ENCODE measurements at regions of chr15 and their contacts with region 1.

Region 1: GRCh38 chr15:85044251-85044853 is 62.7 kb downstream of the PDE8A start:
- DNase-seq: peak; percentile 77
- H3K4me3 ChIP-seq: no peak overlapping the region
- H3K27ac ChIP-seq: no peak overlapping the region
- H3K4me1 ChIP-seq: peaks cover 47% of the 10 kb centered on the region
- H3K27me3 ChIP-seq: no peaks in the 10 kb centered on the region
- CTCF ChIP-seq: peak; percentile 67

Region 2: GRCh38 chr15:84588053-84588874 is 456.1 kb before region 1 on chr15:
- CTCF ChIA-PET with region 1: no interaction called
- POLR2A ChIA-PET with region 1: no interaction called
- intact Hi-C with region 1: loop called (anchors 5 kb)
- DNase-seq: peak; percentile 91
- H3K4me3 ChIP-seq: peak overlapping the region; percentile 39
- H3K27ac ChIP-seq: no peak overlapping the region
- H3K4me1 ChIP-seq: peaks cover 12% of the 10 kb centered on the region
- H3K27me3 ChIP-seq: no peaks in the 10 kb centered on the region
- CTCF ChIP-seq: peak; percentile 70

Region 3: DNA sequence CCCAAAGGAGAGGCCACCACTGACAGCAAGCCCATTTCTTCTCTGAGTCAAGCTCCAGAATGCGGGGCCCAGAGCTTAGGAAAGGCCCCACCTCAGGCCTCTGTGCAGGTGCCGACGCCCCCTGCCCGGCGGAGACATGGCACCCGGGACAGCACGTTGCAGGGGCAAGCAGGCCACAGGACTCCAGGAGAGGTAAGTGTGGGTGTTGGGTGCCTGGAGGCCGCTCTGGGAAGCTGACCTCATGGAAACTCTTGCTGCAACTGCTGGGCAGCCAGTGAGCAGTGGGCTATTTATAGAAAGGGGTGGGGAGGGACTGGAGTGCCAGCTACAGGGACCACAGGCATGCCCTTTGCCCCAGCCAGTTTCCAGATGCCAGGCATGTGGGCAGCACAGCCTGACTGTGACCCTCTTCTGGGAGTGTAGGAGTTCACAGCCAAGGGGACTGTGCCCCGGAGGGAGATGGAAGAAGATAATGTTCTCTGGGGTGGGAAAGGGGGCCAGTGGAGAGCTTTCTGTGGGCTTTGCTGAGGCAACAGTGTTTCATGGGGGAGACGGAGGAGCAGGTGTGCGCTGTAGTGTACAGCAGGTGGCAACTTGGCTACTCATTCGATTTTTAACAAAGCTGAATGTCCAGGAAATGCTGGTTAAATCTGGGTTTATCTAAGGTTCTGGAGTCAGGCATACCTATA is 203.5 kb before region 1 on chr15:
- CTCF ChIA-PET with region 1: no interaction called
- POLR2A ChIA-PET with region 1: no interaction called
- intact Hi-C with region 1: loop called (anchors 10 kb)
- DNase-seq: no peak
- H3K4me3 ChIP-seq: no peak overlapping the region
- H3K27ac ChIP-seq: no peak overlapping the region
- H3K4me1 ChIP-seq: no peaks in the 10 kb centered on the region
- H3K27me3 ChIP-seq: no peaks in the 10 kb centered on the region
- CTCF ChIP-seq: no peak

Region 4: GRCh38 chr15:84987949-84988624 is 56.3 kb before region 1 on chr15:
- CTCF ChIA-PET with region 1: no interaction called
- POLR2A ChIA-PET with region 1: no interaction called
- intact Hi-C with region 1: loop called (anchors 5 kb)
- DNase-seq: no peak
- H3K4me3 ChIP-seq: no peak overlapping the region
- H3K27ac ChIP-seq: no peak overlapping the region
- H3K4me1 ChIP-seq: peaks cover 72% of the 10 kb centered on the region
- H3K27me3 ChIP-seq: no peaks in the 10 kb centered on the region
- CTCF ChIP-seq: no peak

Region 5: GRCh38 chr15:85337425-85338074 is 293.2 kb after region 1 on chr15:
- CTCF ChIA-PET with region 1: no interaction called
- POLR2A ChIA-PET with region 1: no interaction called
- intact Hi-C with region 1: no loop called
- DNase-seq: no peak
- H3K4me3 ChIP-seq: no peak overlapping the region
- H3K27ac ChIP-seq: no peak overlapping the region
- H3K4me1 ChIP-seq: no peaks in the 10 kb centered on the region
- H3K27me3 ChIP-seq: no peaks in the 10 kb centered on the region
- CTCF ChIP-seq: no peak

Measured in A673 (cell line).